Activated T-helper 1 cell treated with anti-CD3 and anti-CD28 coated beads, Interleukin-12 subunit alpha, Interleukin-12 subunit beta, Interleukin-2, Interleukin-4 antibody, amounts not matched to agents 30 ng/mL and 10 ng/mL and 1 ng/mL, durations not matched to agents 14 hours and 24 hours and 36 hours (primary cell): ENCODE measurements at regions of chr17 and their contacts with region 1.

Region 1: DNA sequence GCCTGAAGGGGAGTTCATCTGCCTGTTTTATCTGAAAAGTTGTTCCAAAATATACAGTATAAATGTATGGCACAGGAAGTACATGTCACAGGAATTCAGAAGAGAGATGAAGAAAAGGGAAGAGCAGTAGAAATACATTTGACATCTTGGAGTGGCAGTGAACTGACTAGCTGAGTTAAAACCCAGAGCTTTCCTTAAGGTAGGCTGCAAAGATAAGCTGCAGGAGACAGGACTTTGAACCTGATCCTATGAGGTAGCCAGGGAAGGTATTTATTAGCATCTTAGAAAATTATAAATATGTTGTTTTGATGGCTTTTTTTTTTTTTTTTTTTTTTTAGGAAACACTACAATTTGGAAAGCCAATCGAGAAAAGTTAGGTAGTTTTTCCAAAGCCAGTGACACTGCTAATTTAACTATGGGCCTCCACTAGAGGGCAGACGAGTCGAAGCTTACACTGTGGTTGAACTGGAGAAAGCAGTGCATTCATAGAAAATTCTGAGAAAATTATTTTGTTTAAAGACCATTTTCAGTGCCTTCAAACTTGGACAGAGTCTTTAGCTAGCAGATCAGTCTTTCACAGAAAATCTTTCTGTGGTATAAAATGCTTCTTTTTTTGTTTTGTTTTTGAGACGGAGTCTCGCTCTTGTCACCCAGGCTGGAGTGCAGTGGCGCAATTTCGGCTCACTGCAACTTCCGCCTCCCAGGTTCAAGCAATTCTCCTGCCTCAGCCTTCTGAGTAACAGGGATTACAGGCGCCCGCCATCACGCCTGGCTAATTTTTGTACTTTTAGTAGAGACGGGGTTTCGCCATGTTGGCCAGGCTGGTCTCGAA is 122.3 kb downstream of the SSH2 start:
- DNase-seq: peak; percentile 52
- H3K4me3 Mint-ChIP-seq: no peak overlapping the region
- H3K27ac Mint-ChIP-seq: no peak overlapping the region
- H3K4me1 Mint-ChIP-seq: peaks cover 23% of the 10 kb centered on the region
- H3K27me3 Mint-ChIP-seq: no peaks in the 10 kb centered on the region

Region 2: DNA sequence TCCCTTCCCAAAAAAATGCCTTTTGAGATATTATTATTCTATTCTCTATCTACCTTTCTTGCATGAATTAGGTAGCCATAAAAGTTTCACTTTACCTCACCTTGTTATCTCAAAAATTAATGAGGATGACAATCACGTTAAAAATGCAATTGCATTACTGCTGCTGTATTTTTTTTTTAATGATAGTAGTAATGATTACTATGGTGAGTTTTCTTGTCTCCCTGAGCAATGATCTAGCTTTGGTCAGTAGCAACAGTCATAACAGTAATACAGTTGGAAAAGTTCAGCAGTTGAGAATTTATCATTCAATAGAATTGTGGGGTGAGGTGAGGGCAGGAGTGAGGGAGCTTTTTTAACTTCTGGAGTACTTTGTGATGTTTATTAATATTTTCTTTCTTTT is 133.6 kb after region 1 on chr17 and contains the start of gene EFCAB5:
- intact Hi-C with region 1: no loop called
- DNase-seq: no peak
- H3K4me3 Mint-ChIP-seq: no peak within 1 kb of the TSS
- H3K27ac Mint-ChIP-seq: no peak within 1 kb of the TSS
- H3K4me1 Mint-ChIP-seq: peaks cover 9% of the 10 kb centered on the region
- H3K27me3 Mint-ChIP-seq: peaks cover 2% of the 10 kb centered on the region
- total RNA-seq, gene EFCAB5: 0.60 and 0.78 TPM in 2 replicates

Region 3: DNA sequence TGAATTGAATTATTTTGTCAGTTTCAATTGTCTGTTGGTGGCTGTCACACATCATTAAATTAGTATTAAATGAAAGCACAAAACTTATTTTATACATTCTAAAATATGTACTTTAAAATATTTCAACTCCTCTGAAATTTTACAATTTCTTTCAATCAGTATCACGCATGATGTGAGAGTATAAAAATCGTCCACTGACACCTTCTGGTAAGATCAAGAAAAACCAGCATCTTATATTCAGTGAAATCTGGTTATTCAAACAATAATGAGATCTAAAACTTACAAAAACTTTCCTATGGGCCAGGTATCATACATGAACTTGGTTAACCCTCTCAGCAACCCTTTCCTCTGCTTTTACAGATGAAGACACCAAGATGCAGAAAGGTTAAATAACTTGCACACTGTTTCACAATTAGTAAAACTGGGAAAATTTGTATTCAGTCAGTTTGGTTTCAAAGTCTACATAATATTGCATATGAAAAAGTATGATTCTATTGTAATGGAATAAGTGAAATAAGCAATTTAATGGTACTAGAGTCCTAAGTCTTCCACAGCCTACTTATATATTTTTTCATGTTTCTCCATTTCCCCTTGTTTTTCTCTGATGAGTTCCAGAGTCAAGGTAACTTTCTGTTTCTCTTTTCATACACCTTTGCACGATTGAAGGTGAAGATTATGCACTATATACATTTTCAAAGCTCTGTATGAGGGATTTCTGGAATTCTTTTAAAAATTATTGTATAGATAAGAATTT is 192.4 kb after region 1 on chr17:
- intact Hi-C with region 1: loop called (anchors 5 kb)
- DNase-seq: no peak
- H3K4me3 Mint-ChIP-seq: no peak overlapping the region
- H3K27ac Mint-ChIP-seq: no peak overlapping the region
- H3K4me1 Mint-ChIP-seq: peaks cover 13% of the 10 kb centered on the region
- H3K27me3 Mint-ChIP-seq: peaks cover 6% of the 10 kb centered on the region

Region 4: GRCh38 chr17:30021708-30022317 is 214.1 kb after region 1 on chr17:
- intact Hi-C with region 1: loop called (anchors 1 kb)
- DNase-seq: peak; percentile 16
- H3K4me3 Mint-ChIP-seq: no peak overlapping the region
- H3K27ac Mint-ChIP-seq: no peak overlapping the region
- H3K4me1 Mint-ChIP-seq: no peaks in the 10 kb centered on the region
- H3K27me3 Mint-ChIP-seq: peaks cover 11% of the 10 kb centered on the region

Region 5: DNA sequence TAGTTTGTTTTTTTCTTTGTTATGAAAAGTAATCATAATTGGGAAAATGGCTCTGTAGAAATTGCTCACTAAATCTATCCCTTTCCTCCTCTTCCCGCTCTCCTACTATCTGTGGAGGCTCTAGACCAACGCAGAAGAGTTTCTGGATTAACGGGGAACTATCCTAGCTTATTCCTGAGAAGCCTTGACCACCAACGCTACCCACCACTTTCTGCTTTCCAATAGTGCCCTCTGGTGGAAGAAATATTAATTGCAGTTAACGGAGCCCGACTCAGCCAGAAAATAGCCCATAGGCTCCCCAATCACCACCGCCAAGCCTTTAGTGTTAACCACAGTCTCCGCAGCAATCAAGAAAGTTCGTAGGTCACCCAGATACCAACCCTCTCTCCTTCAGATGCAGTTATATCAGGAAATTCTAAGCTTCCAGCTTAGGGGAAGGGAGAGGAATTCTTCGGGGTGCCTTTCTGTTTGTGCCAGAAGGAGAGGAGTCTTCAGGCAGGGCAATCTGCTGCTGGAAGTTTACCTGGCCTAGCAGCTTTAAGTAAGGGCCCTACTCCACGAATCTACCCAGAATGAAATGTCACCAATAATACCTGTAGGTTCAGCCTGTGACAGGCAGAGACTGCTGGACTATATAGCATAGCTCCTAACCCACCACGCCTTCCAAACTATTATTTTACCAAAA is 285.9 kb after region 1 on chr17:
- intact Hi-C with region 1: loop called (anchors 1 kb)
- DNase-seq: peak; percentile 25
- H3K4me3 Mint-ChIP-seq: no peak overlapping the region
- H3K27ac Mint-ChIP-seq: no peak overlapping the region
- H3K4me1 Mint-ChIP-seq: peaks cover 9% of the 10 kb centered on the region
- H3K27me3 Mint-ChIP-seq: peaks cover 39% of the 10 kb centered on the region